ENCODE measurements at regions of chr1 and their contacts with region 1.

Region 1: DNA sequence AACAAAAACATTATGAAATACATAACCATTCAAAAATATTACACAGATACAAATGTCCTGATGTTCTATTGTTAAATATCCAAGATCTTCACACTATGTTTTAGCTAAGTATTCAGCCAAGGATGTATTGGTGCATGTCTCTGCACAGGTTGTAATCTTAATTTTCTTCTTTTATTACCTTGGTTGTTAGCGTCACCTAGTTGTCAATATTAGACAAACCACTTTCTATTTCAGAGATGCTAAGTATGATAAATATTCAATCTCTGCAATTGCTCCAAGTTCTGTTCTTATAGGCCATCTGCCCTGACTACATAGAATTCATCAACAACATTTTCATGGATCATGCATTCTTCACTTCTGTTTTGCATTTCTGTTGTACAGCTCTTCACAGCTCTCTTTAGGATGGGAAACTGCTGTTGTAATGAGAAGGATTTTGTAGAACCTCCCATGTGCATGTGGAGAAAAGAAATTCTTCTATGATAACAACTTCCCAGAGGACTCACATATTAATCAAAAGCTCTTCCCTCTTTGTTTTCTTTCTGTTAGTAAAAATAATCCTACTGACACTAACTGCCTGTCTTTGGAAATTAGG is 380.1 kb downstream of the NUF2 start:
- DNase-seq: no peak
- H3K4me3 ChIP-seq: no peak overlapping the region
- H3K27ac ChIP-seq: no peak overlapping the region
- H3K4me1 ChIP-seq: no peaks in the 10 kb centered on the region
- H3K27me3 ChIP-seq: no peaks in the 10 kb centered on the region
- CTCF ChIP-seq: no peak

Region 2: GRCh38 chr1:163410073-163410999 is 291.5 kb before region 1 on chr1:
- intact Hi-C with region 1: loop called (anchors 10 kb)
- DNase-seq: peak; percentile 60
- H3K4me3 ChIP-seq: no peak overlapping the region
- H3K27ac ChIP-seq: no peak overlapping the region
- H3K4me1 ChIP-seq: no peaks in the 10 kb centered on the region
- H3K27me3 ChIP-seq: no peaks in the 10 kb centered on the region
- CTCF ChIP-seq: peak; percentile 63

Region 3: GRCh38 chr1:163561580-163562295 is 140.1 kb before region 1 on chr1:
- intact Hi-C with region 1: loop called (anchors 10 kb)
- DNase-seq: no peak
- H3K4me3 ChIP-seq: no peak overlapping the region
- H3K27ac ChIP-seq: no peak overlapping the region
- H3K4me1 ChIP-seq: no peaks in the 10 kb centered on the region
- H3K27me3 ChIP-seq: no peaks in the 10 kb centered on the region
- CTCF ChIP-seq: peak; percentile 13